Lower leg skin (tissue), 4 donors: ENCODE measurements at regions of chr19 and their contacts with region 1.

Region 1: GRCh38 chr19:29040951-29041350 is 172.0 kb downstream of the UQCRFS1 start:
- DNase-seq: no peak
- H3K4me3 ChIP-seq: no peak overlapping the region
- CTCF ChIP-seq: no peak
- POLR2A ChIP-seq: no peak

Region 2: DNA sequence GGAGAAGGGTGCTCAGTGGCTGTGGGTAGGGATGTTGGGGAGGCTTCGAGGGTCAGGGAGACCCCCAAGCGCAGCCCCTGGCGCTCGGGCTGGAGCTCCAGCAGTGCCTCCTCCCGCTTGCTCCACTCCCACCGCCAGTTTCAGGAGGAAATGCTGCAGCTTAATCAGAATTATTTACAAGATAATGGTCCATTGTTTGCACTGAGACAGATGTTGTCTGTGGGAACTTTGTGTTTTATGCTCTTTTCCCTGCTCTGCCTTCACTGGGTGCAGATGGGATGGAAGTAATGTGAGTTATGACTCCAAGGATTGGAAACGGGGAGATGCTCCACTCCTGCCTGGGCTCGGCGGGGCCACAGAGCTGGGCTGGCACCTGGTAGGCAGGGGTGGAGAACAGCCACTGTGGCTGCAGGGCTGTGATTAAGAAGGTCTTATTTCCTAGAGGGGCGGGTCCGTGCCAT is 1523.6 kb after region 1 on chr19:
- intact Hi-C with region 1: loop called (anchors 10 kb)
- DNase-seq: no peak
- H3K4me3 ChIP-seq: no peak overlapping the region
- CTCF ChIP-seq: no peak
- POLR2A ChIP-seq: no peak